Activated CD8-positive, alpha-beta T cell treated with anti-CD3 and anti-CD28 coated beads for 36 hours (primary cell): ENCODE measurements at regions of chr2 and their contacts with region 1.

Region 1: DNA sequence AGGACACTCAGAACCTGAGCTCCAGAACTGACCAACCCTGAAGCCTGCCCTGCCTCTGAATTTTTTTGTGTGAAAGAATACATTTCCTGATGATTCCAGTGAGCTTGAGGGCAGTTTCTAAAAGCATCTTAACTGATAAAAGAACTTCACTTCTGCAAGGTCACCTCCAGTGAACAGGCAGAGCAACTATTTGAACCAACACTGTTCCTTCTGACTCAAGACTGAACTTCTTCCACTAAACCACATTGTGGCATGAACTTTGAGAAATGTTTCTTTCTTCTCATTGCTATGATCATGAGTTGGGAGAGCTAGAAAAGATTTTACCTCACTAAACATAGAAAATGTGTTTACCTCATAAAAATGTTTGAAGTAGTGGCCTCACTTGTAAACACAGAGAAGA is 83.8 kb upstream of the SERTAD2 start:
- DNase-seq: peak; percentile 37
- ATAC-seq: peak; percentile 82
- H3K4me3 Mint-ChIP-seq: peak overlapping the region; percentile 47
- H3K27ac Mint-ChIP-seq: peak overlapping the region; percentile 88
- H3K4me1 Mint-ChIP-seq: peaks cover 40% of the 10 kb centered on the region
- H3K27me3 Mint-ChIP-seq: no peaks in the 10 kb centered on the region
- CTCF ChIP-seq: no peak

Region 2: DNA sequence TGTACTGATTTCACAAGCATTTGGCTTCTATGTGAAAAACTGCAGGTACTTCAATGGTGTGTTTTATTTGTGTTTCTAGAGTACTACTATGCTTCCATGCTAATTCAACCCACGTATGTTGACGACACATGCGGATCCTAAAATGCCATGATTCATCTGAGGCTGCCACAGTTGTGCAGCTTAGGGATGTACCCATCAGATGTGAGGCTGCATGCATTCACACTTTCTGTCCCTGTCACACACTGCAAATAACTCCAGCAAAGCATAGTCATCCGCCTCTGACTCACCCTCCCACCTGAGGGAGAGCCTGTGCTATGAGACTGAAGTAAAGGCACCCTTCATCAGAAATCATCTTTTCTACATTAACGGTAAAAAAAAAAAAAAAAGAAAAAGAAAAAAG is 61.7 kb before region 1 on chr2:
- CTCF ChIA-PET with region 1: no interaction called
- POLR2A ChIA-PET with region 1: interaction called, 4 read pairs
- intact Hi-C with region 1: loop called (anchors 1 kb)
- DNase-seq: peak; percentile 92
- ATAC-seq: peak; percentile 98
- H3K4me3 Mint-ChIP-seq: no peak overlapping the region
- H3K27ac Mint-ChIP-seq: peak overlapping the region; percentile 64
- H3K4me1 Mint-ChIP-seq: peaks cover 63% of the 10 kb centered on the region
- H3K27me3 Mint-ChIP-seq: no peaks in the 10 kb centered on the region
- CTCF ChIP-seq: no peak

Region 3: DNA sequence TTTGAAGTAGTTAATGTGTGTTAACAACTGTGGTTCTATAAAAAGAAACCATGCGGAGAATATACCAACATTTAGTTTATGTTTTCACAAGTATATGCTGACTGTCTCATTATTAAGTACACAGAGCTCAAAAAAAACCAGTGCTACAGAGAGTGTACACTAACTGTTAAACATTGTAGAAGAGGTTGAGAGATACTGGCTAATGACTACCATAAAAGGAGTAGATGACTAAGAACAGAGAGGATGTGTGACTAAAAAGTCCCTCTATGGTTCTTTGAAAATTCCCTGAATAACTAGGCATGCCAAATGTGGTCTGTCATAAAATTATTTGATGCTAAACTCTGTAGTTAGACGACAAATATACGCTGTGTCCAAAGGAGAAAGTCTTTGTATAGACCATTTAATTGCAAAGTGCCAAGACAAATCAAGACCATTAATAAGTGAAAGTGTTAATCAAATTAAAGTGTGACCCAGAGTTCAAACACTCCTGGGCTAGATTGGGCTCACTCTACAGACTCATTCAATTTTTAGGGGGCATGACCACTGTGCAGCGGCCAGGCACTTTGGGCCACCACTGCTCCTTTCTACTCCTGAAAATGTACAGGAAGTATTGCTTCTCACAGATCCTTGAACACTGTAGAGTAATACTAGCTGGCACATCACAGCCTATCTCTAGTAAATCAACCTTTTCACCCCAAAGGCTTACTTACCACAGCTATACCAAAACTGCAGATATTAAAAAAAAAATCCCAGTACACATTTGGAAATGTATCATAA is 38.7 kb before region 1 on chr2:
- CTCF ChIA-PET with region 1: no interaction called
- POLR2A ChIA-PET with region 1: interaction called, 3 read pairs
- intact Hi-C with region 1: loop called (anchors 5 kb)
- DNase-seq: no peak
- ATAC-seq: peak; percentile 90
- H3K4me3 Mint-ChIP-seq: peak overlapping the region; percentile 52
- H3K27ac Mint-ChIP-seq: peak overlapping the region; percentile 87
- H3K4me1 Mint-ChIP-seq: peaks cover 60% of the 10 kb centered on the region
- H3K27me3 Mint-ChIP-seq: no peaks in the 10 kb centered on the region
- CTCF ChIP-seq: no peak

Region 4: DNA sequence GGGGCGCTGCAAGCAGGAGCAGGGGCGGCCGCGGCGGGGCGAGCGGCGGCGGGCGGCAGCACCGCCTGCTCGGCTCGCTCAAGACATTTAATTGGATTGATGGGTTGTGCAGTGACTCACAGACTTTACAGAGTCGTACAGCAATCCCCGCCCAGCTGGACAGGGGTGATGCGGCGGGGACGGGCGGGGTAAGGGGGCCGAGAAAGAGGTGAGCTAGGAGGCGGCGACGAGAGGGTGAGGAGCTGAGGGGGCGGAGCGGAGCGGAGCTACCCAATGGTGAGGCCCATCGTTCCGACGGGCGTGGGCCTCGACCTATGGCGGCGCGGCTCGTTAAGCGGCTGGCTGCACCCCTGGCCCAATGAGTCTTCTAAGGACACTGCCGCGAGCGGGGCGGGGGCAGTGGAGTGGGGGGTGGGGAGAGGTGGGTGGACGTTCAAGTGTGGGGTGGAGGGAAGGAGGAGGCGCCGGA is 13.3 kb after region 1 on chr2:
- CTCF ChIA-PET with region 1: interaction called, 22 read pairs
- POLR2A ChIA-PET with region 1: interaction called, 5 read pairs
- intact Hi-C with region 1: no loop called
- DNase-seq: peak; percentile 99
- ATAC-seq: peak; percentile 86
- H3K4me3 Mint-ChIP-seq: peak overlapping the region; percentile 93
- H3K27ac Mint-ChIP-seq: peak overlapping the region; percentile 97
- H3K4me1 Mint-ChIP-seq: peaks cover 29% of the 10 kb centered on the region
- H3K27me3 Mint-ChIP-seq: no peaks in the 10 kb centered on the region
- CTCF ChIP-seq: no peak

Region 5: DNA sequence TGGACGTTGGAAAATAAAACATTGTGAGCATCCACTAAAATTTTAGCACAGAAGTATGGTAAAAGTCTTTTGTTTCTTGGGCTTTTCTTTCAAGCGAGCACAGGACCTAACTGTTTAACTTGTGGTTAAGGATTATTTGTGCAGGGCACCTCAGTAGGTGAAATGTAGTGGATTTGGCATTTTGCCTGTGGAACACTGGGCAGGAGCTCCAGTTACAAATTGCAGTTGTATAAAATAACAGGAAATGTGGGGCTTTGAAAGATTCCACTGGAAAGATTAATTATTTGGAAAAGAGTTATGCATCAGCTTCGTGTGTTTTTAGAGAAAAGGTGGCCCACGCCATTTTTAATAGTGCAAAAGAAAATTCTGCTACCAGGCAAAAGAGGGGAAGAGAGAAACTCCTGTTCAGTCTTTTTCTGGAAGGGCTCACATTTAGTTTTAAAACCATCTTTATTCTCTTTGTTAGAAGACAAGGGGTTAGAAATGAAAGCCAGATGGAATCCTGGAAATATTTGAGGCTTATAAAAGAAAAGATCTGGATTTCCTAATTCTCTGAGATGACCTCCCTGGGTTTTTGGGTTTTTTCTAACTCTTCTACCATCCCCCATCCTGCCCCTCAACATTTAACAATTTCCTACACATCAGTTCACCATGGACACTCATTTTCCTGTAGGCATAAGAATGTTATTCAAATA is 60.5 kb after region 1 on chr2:
- CTCF ChIA-PET with region 1: no interaction called
- POLR2A ChIA-PET with region 1: no interaction called
- intact Hi-C with region 1: no loop called
- DNase-seq: no peak
- ATAC-seq: no peak
- H3K4me3 Mint-ChIP-seq: no peak overlapping the region
- H3K27ac Mint-ChIP-seq: no peak overlapping the region
- H3K4me1 Mint-ChIP-seq: no peaks in the 10 kb centered on the region
- H3K27me3 Mint-ChIP-seq: peaks cover 2% of the 10 kb centered on the region
- CTCF ChIP-seq: no peak

Region 6: DNA sequence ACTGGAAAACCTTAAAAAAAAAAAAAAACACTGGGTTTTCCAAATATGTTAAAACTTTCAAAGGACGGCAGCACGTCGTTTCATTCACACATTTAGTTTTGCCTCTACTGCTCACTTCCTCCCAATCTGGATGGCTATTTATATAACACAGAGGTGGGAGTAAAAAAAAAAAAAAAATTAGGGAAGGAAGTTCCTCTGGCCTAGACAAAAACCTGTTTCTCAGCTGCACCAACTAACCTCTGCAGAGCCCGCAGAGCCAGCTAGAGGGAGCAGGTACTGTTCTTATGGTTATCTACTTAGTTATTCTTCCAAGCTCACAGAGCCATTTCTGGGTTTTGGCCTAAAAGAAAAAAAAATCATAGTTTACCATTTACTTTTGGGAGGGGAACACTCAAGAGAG is 279.8 kb after region 1 on chr2:
- CTCF ChIA-PET with region 1: no interaction called
- POLR2A ChIA-PET with region 1: no interaction called
- intact Hi-C with region 1: no loop called
- DNase-seq: no peak
- ATAC-seq: no peak
- H3K4me3 Mint-ChIP-seq: no peak overlapping the region
- H3K27ac Mint-ChIP-seq: no peak overlapping the region
- H3K4me1 Mint-ChIP-seq: no peaks in the 10 kb centered on the region
- H3K27me3 Mint-ChIP-seq: no peaks in the 10 kb centered on the region
- CTCF ChIP-seq: no peak